Breast epithelium (tissue), 4 donors: ENCODE measurements at regions of chr18 and their contacts with region 1.

Region 1: DNA sequence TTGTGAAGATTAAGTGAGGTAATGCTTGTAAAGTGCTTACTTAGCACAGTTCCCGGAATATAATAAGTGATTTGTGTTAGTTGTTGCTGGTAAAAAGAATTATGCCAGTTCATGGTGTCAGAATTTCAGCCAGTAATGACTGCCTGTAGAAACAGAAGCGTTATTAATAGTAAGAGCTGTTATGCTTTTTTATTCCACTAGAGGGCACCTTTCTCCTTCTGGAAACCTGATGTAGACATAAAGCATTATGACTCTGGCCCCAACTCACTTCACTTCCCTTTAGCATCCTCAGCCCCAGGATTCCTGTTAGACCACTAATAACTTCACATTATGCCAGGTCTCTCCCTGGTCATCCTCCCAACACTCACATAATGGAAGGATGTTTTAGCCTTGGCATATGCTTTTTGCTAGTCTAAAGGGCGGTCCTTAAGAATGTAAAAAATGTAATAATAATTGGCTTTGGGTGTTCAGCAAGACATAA is 34.9 kb downstream of the C18orf54 start:
- DNase-seq: no peak
- H3K4me3 ChIP-seq: no peak overlapping the region
- H3K27ac ChIP-seq: no peak overlapping the region
- H3K4me1 ChIP-seq: no peaks in the 10 kb centered on the region
- H3K27me3 ChIP-seq: no peaks in the 10 kb centered on the region
- CTCF ChIP-seq: peak; percentile 46 to 61 (median 60)
- POLR2A ChIP-seq: no peak

Region 2: GRCh38 chr18:52995875-52996274 is 1396.7 kb before region 1 on chr18:
- intact Hi-C with region 1: loop called (anchors 5 kb)
- DNase-seq: no peak
- H3K4me3 ChIP-seq: no peak overlapping the region
- H3K27ac ChIP-seq: no peak overlapping the region
- H3K4me1 ChIP-seq: no peaks in the 10 kb centered on the region
- H3K27me3 ChIP-seq: no peaks in the 10 kb centered on the region
- CTCF ChIP-seq: no peak
- POLR2A ChIP-seq: no peak